Activated CD4-positive, alpha-beta memory T cell treated with anti-CD3 and anti-CD28 coated beads for 36 hours (primary cell): ENCODE measurements at regions of chr16 and their contacts with region 1.

Region 1: DNA sequence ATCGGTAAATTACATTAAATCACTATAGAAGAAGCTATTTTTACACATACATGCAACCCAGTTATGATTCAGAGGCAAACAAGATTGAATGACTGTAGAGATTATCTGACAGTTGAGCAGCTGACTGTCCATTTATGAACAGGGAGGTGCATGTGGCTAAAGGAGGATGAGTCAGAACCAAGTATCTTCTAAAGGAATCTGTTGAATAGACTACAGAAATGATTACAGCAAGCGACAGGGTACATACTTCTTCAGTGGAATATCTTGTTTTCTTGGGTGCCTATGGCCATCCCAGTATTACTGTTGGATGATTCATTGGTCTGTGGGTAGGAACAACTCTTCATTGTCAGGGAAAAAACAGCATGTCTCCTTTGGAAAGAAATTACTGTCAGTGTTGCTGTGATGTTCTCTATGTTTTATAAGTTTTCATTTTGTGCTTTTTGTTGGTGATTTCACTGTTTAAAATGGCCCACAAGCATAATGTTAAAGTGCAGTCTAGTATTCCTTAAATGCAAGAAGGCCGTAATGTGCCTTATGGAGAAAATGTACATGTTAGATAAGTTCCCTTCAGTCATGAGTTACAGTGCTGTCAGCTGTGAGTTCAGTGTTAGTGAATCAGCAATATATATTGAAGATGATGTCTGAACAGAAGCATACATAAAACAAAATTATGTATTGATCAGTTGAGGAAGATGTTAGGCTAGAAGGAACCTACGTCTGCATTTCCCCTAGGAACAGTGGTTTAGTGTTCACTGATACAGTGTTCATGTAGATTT is 27.0 kb downstream of the CBFB start:
- DNase-seq: peak; percentile 36
- H3K4me3 Mint-ChIP-seq: peak overlapping the region; percentile 54
- H3K27ac Mint-ChIP-seq: peak overlapping the region; percentile 77
- H3K4me1 Mint-ChIP-seq: peaks cover 48% of the 10 kb centered on the region
- H3K27me3 Mint-ChIP-seq: no peaks in the 10 kb centered on the region

Region 2: DNA sequence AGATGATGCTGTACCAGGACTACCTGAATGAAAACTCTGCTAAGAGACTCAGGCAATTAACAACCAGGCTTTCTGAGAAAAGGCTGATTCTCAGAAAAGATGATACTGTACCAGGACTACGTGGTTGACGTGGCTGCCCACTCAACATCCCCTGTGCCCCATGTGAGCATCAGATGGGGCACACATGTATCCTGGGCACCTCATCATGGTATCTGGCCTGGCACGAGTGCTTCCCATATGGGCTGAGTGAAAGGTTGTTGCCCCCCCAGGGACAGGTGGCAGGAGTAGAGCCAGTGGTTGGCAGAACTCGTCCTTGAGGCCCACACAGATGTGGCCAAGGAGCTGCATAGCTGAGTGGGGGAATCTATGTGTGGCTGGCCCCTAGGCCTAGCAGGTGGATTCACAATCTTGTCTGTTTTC is 71.0 kb before region 1 on chr16:
- CTCF ChIA-PET with region 1: no interaction called
- POLR2A ChIA-PET with region 1: interaction called, 3 read pairs
- intact Hi-C with region 1: loop called (anchors 1 kb)
- DNase-seq: peak; percentile 91
- H3K4me3 Mint-ChIP-seq: peak overlapping the region; percentile 55
- H3K27ac Mint-ChIP-seq: peak overlapping the region; percentile 100
- H3K4me1 Mint-ChIP-seq: peaks cover 63% of the 10 kb centered on the region
- H3K27me3 Mint-ChIP-seq: no peaks in the 10 kb centered on the region

Region 3: DNA sequence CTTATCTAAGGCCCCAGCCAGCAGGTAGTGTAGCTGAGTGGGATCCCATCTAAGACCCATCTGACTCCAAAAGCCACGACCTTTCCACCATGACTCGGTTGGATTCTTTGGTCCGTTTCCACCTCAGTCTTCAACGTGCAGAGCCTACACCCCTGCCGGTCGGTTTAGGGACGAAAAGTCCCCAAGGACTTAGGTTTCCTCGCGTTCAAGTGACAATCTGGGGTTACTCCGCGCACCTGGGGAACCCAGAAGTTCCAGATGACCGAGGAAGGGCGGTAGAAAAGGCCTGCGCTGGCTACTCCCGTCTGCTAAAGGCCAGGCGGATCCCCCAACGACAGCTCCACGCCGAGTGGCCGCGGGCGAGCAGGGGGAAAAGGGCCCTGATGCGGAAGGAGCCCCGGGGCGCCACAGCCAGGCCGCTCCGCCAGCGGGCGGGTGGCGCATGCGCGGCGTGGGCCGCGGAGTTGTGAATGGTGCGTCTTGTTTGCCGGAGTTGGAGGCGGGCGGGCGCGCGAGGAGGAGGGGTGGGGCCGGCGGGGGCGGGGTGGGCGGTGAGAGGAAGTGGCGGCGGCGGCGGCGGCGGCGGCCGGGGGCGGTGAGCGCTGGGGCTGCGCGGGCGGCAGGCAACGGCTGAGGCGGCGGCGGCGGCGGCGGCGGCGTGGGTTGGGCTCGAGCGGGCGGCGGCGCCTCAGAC is 27.2 kb before region 1 on chr16 and contains the start of gene CBFB:
- CTCF ChIA-PET with region 1: interaction called, 4 read pairs
- POLR2A ChIA-PET with region 1: interaction called, 11 read pairs
- intact Hi-C with region 1: loop called (anchors 1 kb)
- DNase-seq: peak; percentile 94
- H3K4me3 Mint-ChIP-seq: peak within 1 kb of the TSS; percentile 89
- H3K27ac Mint-ChIP-seq: peak within 1 kb of the TSS; percentile 93
- H3K4me1 Mint-ChIP-seq: peaks cover 39% of the 10 kb centered on the region
- H3K27me3 Mint-ChIP-seq: no peaks in the 10 kb centered on the region
- total RNA-seq, gene CBFB: 155 to 163 TPM

Region 4: DNA sequence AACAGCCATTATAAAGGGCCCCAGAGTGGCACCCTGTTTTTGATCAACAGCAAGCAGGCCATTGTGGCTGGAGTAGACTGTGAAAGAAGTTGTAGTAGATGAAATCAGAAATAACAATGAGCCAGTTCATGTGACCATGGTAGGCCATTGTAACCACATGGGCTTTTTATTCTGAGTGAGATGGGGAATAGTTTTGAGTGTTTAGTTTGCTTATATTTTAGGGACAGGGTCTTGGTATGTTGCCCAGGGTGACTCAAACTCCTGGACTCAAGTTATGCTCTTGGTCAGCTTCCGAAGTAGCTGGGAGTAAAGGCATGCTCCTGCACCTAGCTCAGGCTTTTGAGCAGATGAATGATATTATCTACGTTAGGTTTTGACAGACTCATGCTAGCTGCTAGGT is 15.0 kb before region 1 on chr16:
- CTCF ChIA-PET with region 1: interaction called, 5 read pairs
- POLR2A ChIA-PET with region 1: no interaction called
- intact Hi-C with region 1: loop called (anchors 2 kb)
- DNase-seq: no peak
- H3K4me3 Mint-ChIP-seq: no peak overlapping the region
- H3K27ac Mint-ChIP-seq: peak overlapping the region; percentile 5
- H3K4me1 Mint-ChIP-seq: peaks cover 43% of the 10 kb centered on the region
- H3K27me3 Mint-ChIP-seq: no peaks in the 10 kb centered on the region

Region 5: GRCh38 chr16:67089101-67089500 is 33.2 kb after region 1 on chr16:
- CTCF ChIA-PET with region 1: no interaction called
- POLR2A ChIA-PET with region 1: no interaction called
- intact Hi-C with region 1: no loop called
- DNase-seq: no peak
- H3K4me3 Mint-ChIP-seq: no peak overlapping the region
- H3K27ac Mint-ChIP-seq: no peak overlapping the region
- H3K4me1 Mint-ChIP-seq: peaks cover 13% of the 10 kb centered on the region
- H3K27me3 Mint-ChIP-seq: no peaks in the 10 kb centered on the region

Region 6: GRCh38 chr16:67104061-67104460 is 48.2 kb after region 1 on chr16:
- CTCF ChIA-PET with region 1: interaction called, 3 read pairs
- POLR2A ChIA-PET with region 1: interaction called, 10 read pairs
- intact Hi-C with region 1: loop called (anchors 2 kb)
- DNase-seq: no peak
- H3K4me3 Mint-ChIP-seq: peak overlapping the region; percentile 0
- H3K27ac Mint-ChIP-seq: no peak overlapping the region
- H3K4me1 Mint-ChIP-seq: peaks cover 7% of the 10 kb centered on the region
- H3K27me3 Mint-ChIP-seq: no peaks in the 10 kb centered on the region

Region 7: GRCh38 chr16:67129422-67129821 is 73.5 kb after region 1 on chr16:
- CTCF ChIA-PET with region 1: no interaction called
- POLR2A ChIA-PET with region 1: no interaction called
- intact Hi-C with region 1: no loop called
- DNase-seq: no peak
- H3K4me3 Mint-ChIP-seq: no peak overlapping the region
- H3K27ac Mint-ChIP-seq: no peak overlapping the region
- H3K4me1 Mint-ChIP-seq: no peaks in the 10 kb centered on the region
- H3K27me3 Mint-ChIP-seq: no peaks in the 10 kb centered on the region

Region 8: GRCh38 chr16:67311607-67312488 is 255.9 kb after region 1 on chr16:
- CTCF ChIA-PET with region 1: no interaction called
- POLR2A ChIA-PET with region 1: no interaction called
- intact Hi-C with region 1: loop called (anchors 2 kb)
- DNase-seq: peak; percentile 95
- H3K4me3 Mint-ChIP-seq: peak overlapping the region; percentile 20
- H3K27ac Mint-ChIP-seq: peak overlapping the region; percentile 95
- H3K4me1 Mint-ChIP-seq: peaks cover 41% of the 10 kb centered on the region
- H3K27me3 Mint-ChIP-seq: no peaks in the 10 kb centered on the region